Ascending aorta (tissue), 2 donors: ENCODE measurements at regions of chr15 and their contacts with region 1.

Region 1: DNA sequence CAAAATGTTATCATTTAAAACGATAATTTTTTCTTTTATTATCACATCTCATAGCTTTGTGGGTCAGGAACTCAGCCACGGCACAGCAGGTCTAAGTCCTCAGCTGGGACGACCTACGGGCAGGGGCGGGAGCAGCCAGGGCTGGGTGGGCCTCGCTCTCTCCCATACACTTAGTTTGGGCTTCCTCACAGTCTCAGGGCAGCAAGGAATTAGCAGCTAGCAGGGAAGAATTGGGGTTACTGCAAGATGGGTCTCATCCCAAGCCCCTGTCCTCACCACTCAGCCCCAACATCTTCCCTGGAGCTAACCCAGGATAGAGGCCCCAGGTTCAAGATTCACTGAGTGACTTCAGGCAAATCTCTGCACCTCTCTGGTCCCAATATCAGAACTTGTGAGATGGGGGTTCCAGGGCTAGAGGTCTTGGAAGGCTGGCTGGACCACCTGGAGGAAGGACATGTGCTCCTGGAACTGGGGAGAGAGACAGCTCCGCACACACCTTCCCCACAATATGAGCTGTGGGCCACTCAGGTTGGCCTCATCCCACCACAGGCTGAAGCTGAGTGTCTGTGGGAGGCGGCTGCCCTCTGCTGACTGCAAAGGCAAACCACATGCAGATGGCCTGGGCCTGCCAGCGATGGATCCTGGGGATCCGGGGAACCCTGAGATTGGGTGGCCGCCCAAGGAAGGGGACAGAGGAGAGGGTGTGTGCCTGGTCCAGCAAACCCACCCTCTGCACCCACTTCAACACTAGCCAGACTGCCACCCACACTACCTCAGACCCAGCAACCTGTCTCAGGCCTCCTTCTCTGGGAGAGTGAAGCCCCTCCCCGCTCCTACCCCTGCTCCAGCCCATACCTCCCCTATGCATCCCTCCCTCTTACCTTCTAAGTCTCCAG is 45.0 kb downstream of the CYP11A1 start:
- DNase-seq: peak in 1 of 2 donors; percentile 75
- H3K4me3 ChIP-seq: no peak overlapping the region
- H3K27ac ChIP-seq: no peak overlapping the region
- H3K4me1 ChIP-seq: peaks cover 12 to 19% of the 10 kb centered on the region in 2 donors
- H3K27me3 ChIP-seq: no peaks in the 10 kb centered on the region
- CTCF ChIP-seq: peak; percentile 85 to 93 (median 91)

Region 2: GRCh38 chr15:74208901-74209559 is 113.4 kb before region 1 on chr15:
- intact Hi-C with region 1: loop called (anchors 2 kb)
- DNase-seq: no peak
- H3K4me3 ChIP-seq: no peak overlapping the region
- H3K27ac ChIP-seq: no peak overlapping the region
- H3K4me1 ChIP-seq: peaks cover 21 to 31% of the 10 kb centered on the region in 2 donors
- H3K27me3 ChIP-seq: no peaks in the 10 kb centered on the region
- CTCF ChIP-seq: no peak

Region 3: GRCh38 chr15:74340139-74340538 is 17.7 kb after region 1 on chr15:
- intact Hi-C with region 1: no loop called
- DNase-seq: no peak
- H3K4me3 ChIP-seq: no peak overlapping the region
- H3K27ac ChIP-seq: no peak overlapping the region
- H3K4me1 ChIP-seq: no peaks in the 10 kb centered on the region
- H3K27me3 ChIP-seq: no peaks in the 10 kb centered on the region
- CTCF ChIP-seq: no peak

Region 4: GRCh38 chr15:74433592-74434262 is 111.3 kb after region 1 on chr15 and contains the start of gene SEMA7A:
- intact Hi-C with region 1: no loop called
- DNase-seq: peak; percentile 49 to 85
- H3K4me3 ChIP-seq: peak within 1 kb of the TSS; percentile 92 to 95
- H3K27ac ChIP-seq: peak within 1 kb of the TSS; percentile 22 to 66
- H3K4me1 ChIP-seq: peaks cover 6 to 16% of the 10 kb centered on the region in 2 donors
- H3K27me3 ChIP-seq: no peaks in the 10 kb centered on the region
- CTCF ChIP-seq: no peak
- total RNA-seq, gene SEMA7A: 5.5 TPM